Activated T-helper 1 cell treated with anti-CD3 and anti-CD28 coated beads, Interleukin-12 subunit alpha, Interleukin-12 subunit beta, Interleukin-2, Interleukin-4 antibody, amounts not matched to agents 30 ng/mL and 10 ng/mL and 1 ng/mL, durations not matched to agents 14 hours and 24 hours and 36 hours (primary cell): ENCODE measurements at regions of chr3 and their contacts with region 1.

Region 1: DNA sequence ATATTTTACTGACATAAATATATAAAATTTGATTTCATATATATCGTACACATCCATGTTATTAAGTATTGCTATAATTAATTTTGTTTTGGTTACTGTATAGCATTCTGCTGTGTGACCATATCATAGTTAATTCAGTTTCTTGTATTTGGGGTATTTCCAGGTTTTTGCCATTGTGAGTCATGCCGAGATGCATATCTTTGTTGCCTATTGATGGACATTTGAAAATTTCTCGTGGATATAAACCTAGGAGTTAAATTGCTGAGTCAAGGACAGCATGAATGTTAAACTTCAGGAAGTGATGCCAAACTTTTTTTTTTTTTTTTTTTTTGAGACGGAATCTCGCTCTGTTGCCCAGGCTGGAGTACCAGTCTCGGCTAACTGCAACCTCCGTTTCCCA is 33.7 kb upstream of the GPR171 start:
- DNase-seq: no peak
- H3K4me3 Mint-ChIP-seq: no peak overlapping the region
- H3K27ac Mint-ChIP-seq: no peak overlapping the region
- H3K4me1 Mint-ChIP-seq: peaks cover 10% of the 10 kb centered on the region
- H3K27me3 Mint-ChIP-seq: peaks cover 4% of the 10 kb centered on the region

Region 2: DNA sequence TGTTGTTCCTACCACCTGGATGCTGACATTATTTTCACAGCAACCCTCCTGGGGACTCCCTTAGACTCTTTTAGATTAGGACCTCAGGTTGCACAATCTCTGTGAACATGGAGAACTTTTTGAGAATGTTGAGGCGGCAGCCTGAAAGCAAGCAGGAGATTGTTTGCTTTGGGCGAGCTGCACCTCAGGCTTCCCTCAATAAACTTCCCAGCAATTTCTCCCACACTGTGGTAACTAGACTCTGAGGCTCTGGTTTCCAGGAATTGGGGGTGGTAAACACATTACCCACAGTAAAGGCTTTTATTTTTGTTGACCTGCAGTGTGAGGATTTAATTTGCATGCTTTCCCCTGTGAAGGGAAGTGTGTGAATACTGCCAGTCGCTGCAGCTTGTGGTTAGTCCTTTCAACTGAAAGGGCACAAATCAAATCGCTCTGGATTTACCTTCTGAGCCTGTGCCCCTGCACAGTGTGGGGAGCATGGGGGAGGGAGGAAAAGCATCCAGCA is 438.6 kb before region 1 on chr3:
- intact Hi-C with region 1: no loop called
- DNase-seq: no peak
- H3K4me3 Mint-ChIP-seq: peak overlapping the region; percentile 30
- H3K27ac Mint-ChIP-seq: no peak overlapping the region
- H3K4me1 Mint-ChIP-seq: peaks cover 23% of the 10 kb centered on the region
- H3K27me3 Mint-ChIP-seq: peaks cover 2% of the 10 kb centered on the region

Region 3: DNA sequence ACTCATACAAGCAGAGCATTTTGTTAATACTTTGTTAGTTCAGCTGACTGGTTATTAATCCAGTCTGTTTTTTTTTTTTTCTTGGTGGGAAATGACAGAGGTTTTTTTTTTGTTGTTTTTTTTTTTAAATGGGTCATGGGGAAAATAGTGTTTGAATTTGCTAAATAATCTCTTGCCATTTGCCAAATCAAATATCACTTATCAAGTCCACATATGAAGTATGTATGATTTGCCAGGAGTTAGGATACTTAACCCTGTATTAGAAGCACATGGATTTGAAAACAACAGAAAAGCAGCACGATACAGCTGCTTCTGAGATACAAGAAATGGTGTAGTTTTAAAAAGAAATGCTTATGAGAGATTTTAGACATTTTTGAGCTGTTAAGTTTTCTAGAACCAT is 20.0 kb after region 1 on chr3:
- intact Hi-C with region 1: loop called (anchors 2 kb)
- DNase-seq: no peak
- H3K4me3 Mint-ChIP-seq: no peak overlapping the region
- H3K27ac Mint-ChIP-seq: no peak overlapping the region
- H3K4me1 Mint-ChIP-seq: no peaks in the 10 kb centered on the region
- H3K27me3 Mint-ChIP-seq: peaks cover 17% of the 10 kb centered on the region